ENCODE measurements at regions of chr10 and their contacts with region 1.

Region 1: GRCh38 chr10:101840741-101841453 is 2.7 kb downstream of the KCNIP2 start:
- DNase-seq: peak; percentile 74 to 90 (median 87)
- H3K4me3 ChIP-seq: peak overlapping the region in 6 of 7 experiments; percentile 21 to 72 (median 52)
- H3K27ac ChIP-seq: no peak overlapping the region
- H3K4me1 ChIP-seq: peaks cover 5 to 36% (median 30%) of the 10 kb centered on the region in 4 experiments
- H3K27me3 ChIP-seq: peaks cover 0 to 23% (median 2%) of the 10 kb centered on the region in 5 experiments

Region 2: GRCh38 chr10:101818119-101818871 is 22.6 kb before region 1 on chr10 and contains the start of gene OGA:
- CTCF ChIA-PET with region 1: interaction called, 27 read pairs
- POLR2A ChIA-PET with region 1: no interaction called
- DNase-seq: peak; percentile 100
- H3K4me3 ChIP-seq: peak within 1 kb of the TSS; percentile 83 to 98 (median 96)
- H3K27ac ChIP-seq: peak within 1 kb of the TSS; percentile 81 to 89
- H3K4me1 ChIP-seq: peaks cover 19 to 48% (median 30%) of the 10 kb centered on the region in 4 experiments
- H3K27me3 ChIP-seq: no peaks in the 10 kb centered on the region

Region 3: GRCh38 chr10:101830322-101831168 is 10.4 kb before region 1 on chr10:
- CTCF ChIA-PET with region 1: interaction called, 18 read pairs
- POLR2A ChIA-PET with region 1: interaction called, 4 read pairs
- DNase-seq: peak; percentile 94 to 96 (median 96)
- H3K4me3 ChIP-seq: peak overlapping the region; percentile 25 to 79 (median 65)
- H3K27ac ChIP-seq: peak overlapping the region; percentile 43 to 77
- H3K4me1 ChIP-seq: peaks cover 4 to 63% (median 53%) of the 10 kb centered on the region in 4 experiments
- H3K27me3 ChIP-seq: no peaks in the 10 kb centered on the region

Region 4: GRCh38 chr10:101858723-101859500 is 18.0 kb after region 1 on chr10:
- CTCF ChIA-PET with region 1: interaction called, 15 read pairs
- POLR2A ChIA-PET with region 1: no interaction called
- DNase-seq: no peak
- H3K4me3 ChIP-seq: no peak overlapping the region
- H3K27ac ChIP-seq: no peak overlapping the region
- H3K4me1 ChIP-seq: peaks cover 0 to 10% (median 0%) of the 10 kb centered on the region in 4 experiments
- H3K27me3 ChIP-seq: no peaks in the 10 kb centered on the region

Region 5: DNA sequence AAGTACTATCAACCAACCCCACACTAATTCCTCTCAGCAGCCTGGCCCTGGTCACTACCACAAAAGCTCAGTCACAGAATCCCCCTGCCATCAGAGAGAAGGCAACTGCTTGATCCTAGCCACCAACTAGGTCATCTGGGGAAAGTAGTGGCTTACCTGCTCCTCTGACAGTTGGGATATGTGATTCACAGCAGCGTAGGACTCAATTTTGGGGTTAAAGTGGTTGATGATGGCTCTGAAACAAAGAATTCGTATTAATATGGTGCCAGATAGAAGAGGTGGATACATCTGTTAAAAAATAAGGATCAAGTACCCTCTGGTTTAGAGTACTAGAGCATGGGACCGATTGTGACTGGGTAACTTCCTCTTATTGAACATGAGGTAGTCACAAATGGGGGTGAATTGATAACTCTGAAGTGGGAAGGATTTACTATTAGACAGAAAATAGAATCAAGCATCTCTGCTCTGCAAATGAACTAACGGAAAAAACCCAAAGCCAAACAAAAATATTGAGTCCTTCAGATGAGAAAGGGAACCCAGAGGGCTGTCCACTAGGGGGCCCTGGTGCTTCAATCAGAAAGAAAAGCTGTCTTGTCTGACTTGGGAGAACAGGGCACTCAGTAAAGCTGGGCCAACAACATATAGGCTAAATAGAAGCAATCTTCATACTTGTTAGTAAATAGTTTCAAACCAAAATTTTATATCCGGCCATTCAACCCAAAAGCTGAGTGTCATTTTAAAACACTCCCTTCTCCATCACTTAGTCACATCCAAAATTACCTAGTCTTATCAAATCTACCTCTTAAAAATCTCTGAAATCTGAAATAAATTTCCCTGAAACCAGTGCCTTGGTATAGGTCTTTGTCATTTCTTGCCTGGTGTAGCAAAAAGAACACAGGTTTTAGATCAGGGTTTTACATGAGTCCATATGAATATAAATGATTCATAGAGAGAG is 48.6 kb after region 1 on chr10:
- CTCF ChIA-PET with region 1: interaction called, 10 read pairs
- POLR2A ChIA-PET with region 1: no interaction called
- DNase-seq: peak; percentile 59 to 77 (median 71)
- H3K4me3 ChIP-seq: no peak overlapping the region
- H3K27ac ChIP-seq: no peak overlapping the region
- H3K4me1 ChIP-seq: no peaks in the 10 kb centered on the region
- H3K27me3 ChIP-seq: no peaks in the 10 kb centered on the region

Region 6: DNA sequence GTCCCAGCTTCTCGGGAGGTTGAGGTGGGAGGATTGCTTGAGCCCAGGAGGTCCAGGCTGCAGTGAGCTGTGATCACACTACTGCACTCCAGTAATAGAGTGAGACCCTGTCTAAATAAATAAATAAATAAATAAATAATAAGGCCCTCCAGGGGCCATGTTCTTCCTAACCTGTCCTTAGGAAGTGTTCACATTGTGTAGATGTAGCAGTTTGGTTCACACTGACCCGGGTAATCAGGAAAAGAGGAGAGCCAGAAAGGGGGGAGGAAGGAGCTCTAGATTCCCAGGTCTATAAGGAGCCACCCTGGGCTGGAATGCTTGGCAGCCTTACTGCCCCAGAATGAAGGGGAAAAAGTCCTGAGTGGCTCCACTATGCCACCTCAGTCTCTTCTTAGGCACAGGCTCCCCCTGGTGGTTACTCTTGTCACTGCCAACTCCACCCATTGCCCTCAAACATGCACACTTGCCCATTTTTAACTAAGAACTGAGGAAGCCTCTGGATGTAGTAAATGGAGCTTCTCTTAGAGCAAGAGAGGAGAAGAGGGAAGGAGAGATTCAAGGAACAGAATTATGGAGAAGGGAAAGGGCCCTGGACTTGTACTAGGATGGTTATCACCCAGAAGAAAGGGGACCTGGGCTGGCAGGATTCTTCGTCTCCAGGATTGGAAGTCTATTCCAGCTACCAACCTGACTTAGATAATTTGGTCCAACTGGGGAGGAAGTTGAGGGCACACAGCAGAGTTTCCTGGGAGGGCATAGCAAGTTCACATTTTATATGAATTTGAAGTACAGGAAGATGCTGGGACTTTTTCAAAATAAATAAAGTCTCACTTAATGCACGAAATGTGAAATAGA is 232.0 kb after region 1 on chr10:
- CTCF ChIA-PET with region 1: interaction called, 40 read pairs
- POLR2A ChIA-PET with region 1: interaction called, 4 read pairs
- DNase-seq: peak; percentile 79 to 90 (median 83)
- H3K4me3 ChIP-seq: no peak overlapping the region
- H3K27ac ChIP-seq: no peak overlapping the region
- H3K4me1 ChIP-seq: peaks cover 3 to 15% (median 5%) of the 10 kb centered on the region in 4 experiments
- H3K27me3 ChIP-seq: no peaks in the 10 kb centered on the region

Region 7: GRCh38 chr10:103145860-103146466 is 1305.1 kb after region 1 on chr10:
- CTCF ChIA-PET with region 1: no interaction called
- POLR2A ChIA-PET with region 1: no interaction called
- DNase-seq: peak in 2 of 3 donors; percentile 40 to 41
- H3K4me3 ChIP-seq: no peak overlapping the region
- H3K27ac ChIP-seq: no peak overlapping the region
- H3K4me1 ChIP-seq: peaks cover 0 to 6% (median 0%) of the 10 kb centered on the region in 4 experiments
- H3K27me3 ChIP-seq: no peaks in the 10 kb centered on the region